CD4-positive, alpha-beta memory T cell (primary cell): ENCODE measurements at regions of chr11 and their contacts with region 1.

Region 1: GRCh38 chr11:5684646-5685362 is at the start of gene TRIM5:
- DNase-seq: peak; percentile 79 to 90 (median 81)
- H3K4me3 ChIP-seq: peak within 1 kb of the TSS; percentile 65 to 100
- H3K4me3 Mint-ChIP-seq: peak within 1 kb of the TSS; percentile 91 to 97 (median 95)
- H3K27ac ChIP-seq: peak within 1 kb of the TSS; percentile 83
- H3K27ac Mint-ChIP-seq: peak within 1 kb of the TSS; percentile 94 to 98 (median 97)
- H3K4me1 ChIP-seq: peaks cover 33% of the 10 kb centered on the region
- H3K4me1 Mint-ChIP-seq: peaks cover 40 to 69% (median 54%) of the 10 kb centered on the region in 4 donors
- H3K27me3 ChIP-seq: no peaks in the 10 kb centered on the region
- H3K27me3 Mint-ChIP-seq: no peaks in the 10 kb centered on the region
- total RNA-seq, gene TRIM5: 33.9 to 35.5 TPM

Region 2: DNA sequence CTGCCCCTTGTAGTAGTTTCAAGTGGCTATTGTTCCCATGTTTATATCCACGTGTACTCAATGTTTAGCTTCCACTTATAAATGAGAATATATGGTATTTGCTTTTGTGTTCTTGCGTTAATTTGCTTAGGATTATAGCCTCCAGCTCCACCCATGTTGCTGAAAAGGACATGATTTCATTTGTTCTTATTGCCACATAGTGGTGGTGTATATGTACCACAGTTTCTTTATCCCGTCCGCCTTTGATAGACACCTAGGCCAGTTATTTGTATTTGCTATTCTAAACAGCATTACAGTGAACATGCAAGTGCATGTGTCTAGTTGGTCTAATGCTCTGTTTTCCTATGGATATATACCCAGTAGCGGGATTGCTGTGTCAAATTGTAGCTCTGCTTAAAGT is 367.5 kb before region 1 on chr11:
- CTCF ChIA-PET with region 1: no interaction called
- POLR2A ChIA-PET with region 1: no interaction called
- intact Hi-C with region 1: no loop called
- DNase-seq: no peak
- H3K4me3 ChIP-seq: no peak overlapping the region
- H3K4me3 Mint-ChIP-seq: no peak overlapping the region
- H3K27ac ChIP-seq: no peak overlapping the region
- H3K27ac Mint-ChIP-seq: no peak overlapping the region
- H3K4me1 ChIP-seq: no peaks in the 10 kb centered on the region
- H3K4me1 Mint-ChIP-seq: no peaks in the 10 kb centered on the region
- H3K27me3 ChIP-seq: no peaks in the 10 kb centered on the region
- H3K27me3 Mint-ChIP-seq: peaks cover 0 to 2% of the 10 kb centered on the region in 2 donors

Region 3: GRCh38 chr11:5624489-5625279 is 60.1 kb before region 1 on chr11 and contains the start of gene TRIM34:
- CTCF ChIA-PET with region 1: interaction called, 8 read pairs
- POLR2A ChIA-PET with region 1: interaction called, 15 read pairs
- intact Hi-C with region 1: loop called (anchors 1 kb)
- DNase-seq: peak; percentile 71 to 80 (median 74)
- H3K4me3 ChIP-seq: peak within 1 kb of the TSS; percentile 71 to 85
- H3K4me3 Mint-ChIP-seq: peak within 1 kb of the TSS; percentile 86 to 98 (median 94)
- H3K27ac ChIP-seq: peak within 1 kb of the TSS; percentile 62
- H3K27ac Mint-ChIP-seq: peak within 1 kb of the TSS; percentile 68 to 99 (median 93)
- H3K4me1 ChIP-seq: peaks cover 32% of the 10 kb centered on the region
- H3K4me1 Mint-ChIP-seq: peaks cover 29 to 52% (median 38%) of the 10 kb centered on the region in 4 donors
- H3K27me3 ChIP-seq: no peaks in the 10 kb centered on the region
- H3K27me3 Mint-ChIP-seq: no peaks in the 10 kb centered on the region
- total RNA-seq, gene TRIM34: 10.4 to 11.6 TPM

Region 4: DNA sequence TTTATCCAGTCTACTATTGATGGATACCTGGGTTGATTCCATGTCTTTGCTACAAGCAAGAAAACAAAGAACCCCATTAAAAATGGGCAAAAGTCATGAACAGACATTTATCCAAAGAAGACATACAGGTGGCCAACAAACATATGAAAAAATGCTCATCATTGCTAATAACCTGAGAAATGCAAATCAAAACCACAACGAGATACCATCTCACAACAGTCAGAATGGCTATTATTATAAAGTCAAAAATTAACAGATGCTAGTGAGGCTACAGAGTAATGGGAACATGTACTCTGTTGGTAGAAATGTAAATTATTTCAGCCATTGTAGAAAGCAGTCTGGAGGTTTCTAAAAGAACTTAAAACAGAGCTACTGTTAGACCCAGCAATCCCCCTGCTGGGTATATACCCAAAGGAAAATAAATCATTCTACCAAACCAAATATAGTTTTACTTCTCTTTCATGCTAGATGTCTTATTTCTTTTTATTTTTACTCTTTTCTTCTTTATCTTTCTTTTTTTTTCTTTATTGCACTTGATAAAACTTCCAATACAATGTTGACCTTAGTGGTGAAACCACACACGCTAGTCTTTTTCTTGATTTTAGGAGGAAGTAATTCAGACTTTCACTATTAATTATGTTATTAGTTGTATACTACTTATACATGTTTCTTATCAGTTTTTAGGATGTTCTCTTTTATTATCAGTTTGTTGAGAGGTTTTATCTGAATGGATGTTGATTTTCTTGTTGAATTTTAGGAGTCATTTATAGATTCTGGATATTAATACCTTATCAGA is 19.1 kb after region 1 on chr11:
- CTCF ChIA-PET with region 1: interaction called, 71 read pairs
- POLR2A ChIA-PET with region 1: interaction called, 25 read pairs
- intact Hi-C with region 1: no loop called
- DNase-seq: no peak
- H3K4me3 ChIP-seq: no peak overlapping the region
- H3K4me3 Mint-ChIP-seq: peak overlapping the region in 3 of 8 donors; percentile 24 to 77 (median 41)
- H3K27ac ChIP-seq: no peak overlapping the region
- H3K27ac Mint-ChIP-seq: peak overlapping the region; percentile 30 to 81 (median 75)
- H3K4me1 ChIP-seq: peaks cover 38% of the 10 kb centered on the region
- H3K4me1 Mint-ChIP-seq: peaks cover 20 to 52% (median 30%) of the 10 kb centered on the region in 4 donors
- H3K27me3 ChIP-seq: no peaks in the 10 kb centered on the region
- H3K27me3 Mint-ChIP-seq: no peaks in the 10 kb centered on the region

Region 5: DNA sequence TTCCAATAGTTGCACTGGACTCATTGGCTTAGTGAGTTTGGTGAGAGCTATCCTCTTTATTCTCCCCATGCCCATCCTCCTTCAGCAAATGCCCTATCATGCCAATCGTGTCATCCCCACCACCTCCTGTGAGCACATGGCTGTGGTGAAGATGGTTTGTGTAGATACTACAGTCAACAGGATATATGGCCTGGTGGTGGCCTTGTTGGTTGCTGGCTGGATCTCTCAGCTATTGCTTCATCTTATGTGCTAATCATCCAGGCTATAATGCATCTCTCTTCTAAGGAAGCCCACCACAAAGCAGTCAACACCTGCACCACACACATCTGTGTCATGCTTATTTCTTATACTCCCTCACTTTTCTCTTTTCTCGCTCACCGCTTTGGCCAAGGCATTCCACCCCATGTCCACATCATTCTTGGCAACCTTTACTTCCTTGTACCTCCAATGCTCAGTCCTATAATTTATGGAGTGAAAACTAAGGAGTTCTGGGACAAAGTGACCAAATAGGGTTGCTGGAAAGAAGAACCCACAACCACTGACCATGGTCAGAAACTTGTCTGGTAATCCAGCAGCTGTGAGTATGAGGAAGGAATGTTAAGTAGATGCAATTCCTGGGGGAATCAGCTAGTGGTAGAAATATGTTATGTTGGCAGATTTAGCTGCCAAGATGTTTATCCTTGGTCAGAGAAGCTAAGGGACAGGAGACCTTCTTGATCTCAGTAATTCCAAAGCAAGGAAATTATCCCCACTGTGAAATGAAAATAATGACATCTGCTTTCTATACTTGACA is 35.1 kb after region 1 on chr11:
- CTCF ChIA-PET with region 1: interaction called, 11 read pairs
- POLR2A ChIA-PET with region 1: interaction called, 5 read pairs
- intact Hi-C with region 1: no loop called
- DNase-seq: no peak
- H3K4me3 ChIP-seq: no peak overlapping the region
- H3K4me3 Mint-ChIP-seq: no peak overlapping the region
- H3K27ac ChIP-seq: no peak overlapping the region
- H3K27ac Mint-ChIP-seq: no peak overlapping the region
- H3K4me1 ChIP-seq: no peaks in the 10 kb centered on the region
- H3K4me1 Mint-ChIP-seq: no peaks in the 10 kb centered on the region
- H3K27me3 ChIP-seq: no peaks in the 10 kb centered on the region
- H3K27me3 Mint-ChIP-seq: peaks cover 0 to 1% of the 10 kb centered on the region in 2 donors